Activated naive CD4-positive, alpha-beta T cell treated with anti-CD3 and anti-CD28 coated beads for 36 hours (primary cell): ENCODE measurements at regions of chr9 and their contacts with region 1.

Region 1: GRCh38 chr9:108885643-108886348 is 23.7 kb downstream of the ACTL7A start:
- DNase-seq: peak; percentile 86
- H3K4me3 Mint-ChIP-seq: peak overlapping the region; percentile 2
- H3K27ac Mint-ChIP-seq: peak overlapping the region; percentile 77
- H3K4me1 Mint-ChIP-seq: peaks cover 19% of the 10 kb centered on the region
- H3K27me3 Mint-ChIP-seq: no peaks in the 10 kb centered on the region

Region 2: GRCh38 chr9:107243751-107244150 is 1642.0 kb before region 1 on chr9:
- CTCF ChIA-PET with region 1: no interaction called
- intact Hi-C with region 1: loop called (anchors 2 kb)
- DNase-seq: peak; percentile 79
- H3K4me3 Mint-ChIP-seq: no peak overlapping the region
- H3K27ac Mint-ChIP-seq: peak overlapping the region; percentile 73
- H3K4me1 Mint-ChIP-seq: peaks cover 33% of the 10 kb centered on the region
- H3K27me3 Mint-ChIP-seq: peaks cover 1% of the 10 kb centered on the region

Region 3: GRCh38 chr9:108859459-108860114 is 26.2 kb before region 1 on chr9:
- CTCF ChIA-PET with region 1: no interaction called
- intact Hi-C with region 1: loop called (anchors 2 kb)
- DNase-seq: peak; percentile 21
- H3K4me3 Mint-ChIP-seq: no peak overlapping the region
- H3K27ac Mint-ChIP-seq: no peak overlapping the region
- H3K4me1 Mint-ChIP-seq: no peaks in the 10 kb centered on the region
- H3K27me3 Mint-ChIP-seq: no peaks in the 10 kb centered on the region

Region 4: GRCh38 chr9:109012876-109013678 is 127.3 kb after region 1 on chr9 and contains the start of gene CTNNAL1:
- CTCF ChIA-PET with region 1: no interaction called
- intact Hi-C with region 1: loop called (anchors 1 kb)
- DNase-seq: peak; percentile 86
- H3K4me3 Mint-ChIP-seq: peak within 1 kb of the TSS; percentile 95
- H3K27ac Mint-ChIP-seq: peak within 1 kb of the TSS; percentile 68
- H3K4me1 Mint-ChIP-seq: peaks cover 28% of the 10 kb centered on the region
- H3K27me3 Mint-ChIP-seq: no peaks in the 10 kb centered on the region
- total RNA-seq, gene CTNNAL1: 18.4 to 19.0 TPM

Region 5: GRCh38 chr9:109320742-109321448 is 435.1 kb after region 1 on chr9 and contains the start of gene EPB41L4B:
- CTCF ChIA-PET with region 1: no interaction called
- intact Hi-C with region 1: loop called (anchors 1 kb)
- DNase-seq: peak; percentile 95
- H3K4me3 Mint-ChIP-seq: peak within 1 kb of the TSS; percentile 69
- H3K27ac Mint-ChIP-seq: no peak within 1 kb of the TSS
- H3K4me1 Mint-ChIP-seq: peaks cover 10% of the 10 kb centered on the region
- H3K27me3 Mint-ChIP-seq: peaks cover 50% of the 10 kb centered on the region
- total RNA-seq, gene EPB41L4B: 0.24 to 0.25 TPM